ENCODE measurements at regions of chr22 and their contacts with region 1.

Region 1: DNA sequence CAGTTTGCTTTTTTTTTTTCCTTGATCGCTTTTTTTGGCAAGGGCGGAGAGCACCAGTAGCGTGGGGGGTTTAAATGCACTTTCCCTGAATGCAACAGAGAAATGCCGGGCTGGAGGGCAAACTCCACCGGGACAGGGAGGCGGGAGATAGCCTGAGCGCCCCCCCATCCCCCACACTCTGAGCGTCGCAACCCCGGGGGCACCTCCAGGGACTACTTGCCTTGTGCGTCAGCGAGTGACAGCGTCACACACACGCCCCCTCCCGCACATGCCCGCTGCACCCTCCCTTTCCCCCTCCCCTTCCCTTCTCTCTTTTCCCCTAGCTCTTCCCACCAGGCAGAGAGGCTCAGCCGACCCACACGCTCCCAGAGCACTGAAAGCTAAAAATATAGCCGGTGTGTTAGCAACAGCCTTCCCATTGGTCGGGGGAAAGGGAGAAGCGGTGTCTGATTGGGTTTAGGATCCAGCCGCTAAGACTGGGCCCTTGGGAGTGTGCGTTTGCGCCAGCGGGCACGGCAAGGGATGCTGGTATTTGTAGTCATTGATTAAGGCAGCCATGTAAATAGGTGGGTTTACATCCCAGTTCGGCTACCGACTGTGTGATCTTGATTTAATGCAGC is 1.7 kb upstream of the TOB2 start:
- DNase-seq: peak; percentile 95
- ATAC-seq: peak; percentile 73
- H3K4me3 Mint-ChIP-seq: peak overlapping the region; percentile 86
- H3K27ac Mint-ChIP-seq: peak overlapping the region; percentile 97
- H3K4me1 Mint-ChIP-seq: peaks cover 8% of the 10 kb centered on the region
- H3K27me3 Mint-ChIP-seq: no peaks in the 10 kb centered on the region

Region 2: DNA sequence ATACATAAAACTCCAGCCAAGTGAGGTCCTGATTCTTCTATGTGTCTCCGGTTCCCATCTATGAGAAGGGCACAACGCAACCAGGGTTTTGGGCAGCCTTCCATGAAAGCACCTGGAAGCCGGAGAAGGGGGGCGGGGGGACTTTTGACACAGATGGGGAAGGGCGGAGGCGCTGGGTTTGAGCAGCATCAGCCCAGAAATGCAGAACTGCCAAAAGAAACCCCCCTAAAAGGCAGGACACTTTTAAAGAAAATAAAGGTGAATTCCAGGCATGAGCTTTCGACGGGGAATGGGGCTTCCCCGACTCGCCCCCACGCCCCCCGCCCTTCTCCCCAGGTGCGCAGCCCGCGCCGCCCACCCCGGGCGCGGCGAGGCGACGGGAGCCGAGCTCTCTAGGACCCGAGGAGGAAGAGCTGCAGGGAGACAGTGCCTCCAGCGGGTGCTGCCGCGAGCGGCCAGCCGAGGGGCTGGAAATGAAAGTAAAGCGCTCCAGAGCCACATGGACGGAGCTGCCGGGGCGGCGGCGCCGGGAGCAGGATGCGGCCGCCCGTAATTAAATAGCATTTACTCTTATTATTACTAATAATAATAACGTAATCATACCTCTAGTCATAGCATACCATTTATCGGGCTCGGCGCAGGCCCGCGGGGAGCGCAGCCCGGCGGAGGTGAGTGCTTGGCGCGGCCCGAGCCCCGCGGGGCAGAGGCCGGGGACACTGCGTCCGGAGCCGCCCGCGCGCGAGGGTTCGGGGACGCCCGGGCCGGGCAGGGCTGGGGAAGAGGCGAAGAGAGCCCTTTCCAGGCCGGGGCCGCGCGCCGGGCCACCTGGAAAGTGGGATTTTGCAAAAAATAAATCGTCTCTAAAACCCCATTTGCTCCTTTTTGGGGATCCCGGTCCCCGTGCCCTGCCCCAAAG is 146.9 kb before region 1 on chr22 and contains the start of gene ZC3H7B:
- CTCF ChIA-PET with region 1: no interaction called
- POLR2A ChIA-PET with region 1: no interaction called
- intact Hi-C with region 1: loop called in 1 of 2 experiments (anchors 1 kb)
- DNase-seq: peak; percentile 92
- ATAC-seq: peak; percentile 96
- H3K4me3 Mint-ChIP-seq: peak within 1 kb of the TSS; percentile 74
- H3K27ac Mint-ChIP-seq: peak within 1 kb of the TSS; percentile 76
- H3K4me1 Mint-ChIP-seq: peaks cover 31% of the 10 kb centered on the region
- H3K27me3 Mint-ChIP-seq: no peaks in the 10 kb centered on the region
- total RNA-seq, gene ZC3H7B: 41.7 to 43.4 TPM

Region 3: DNA sequence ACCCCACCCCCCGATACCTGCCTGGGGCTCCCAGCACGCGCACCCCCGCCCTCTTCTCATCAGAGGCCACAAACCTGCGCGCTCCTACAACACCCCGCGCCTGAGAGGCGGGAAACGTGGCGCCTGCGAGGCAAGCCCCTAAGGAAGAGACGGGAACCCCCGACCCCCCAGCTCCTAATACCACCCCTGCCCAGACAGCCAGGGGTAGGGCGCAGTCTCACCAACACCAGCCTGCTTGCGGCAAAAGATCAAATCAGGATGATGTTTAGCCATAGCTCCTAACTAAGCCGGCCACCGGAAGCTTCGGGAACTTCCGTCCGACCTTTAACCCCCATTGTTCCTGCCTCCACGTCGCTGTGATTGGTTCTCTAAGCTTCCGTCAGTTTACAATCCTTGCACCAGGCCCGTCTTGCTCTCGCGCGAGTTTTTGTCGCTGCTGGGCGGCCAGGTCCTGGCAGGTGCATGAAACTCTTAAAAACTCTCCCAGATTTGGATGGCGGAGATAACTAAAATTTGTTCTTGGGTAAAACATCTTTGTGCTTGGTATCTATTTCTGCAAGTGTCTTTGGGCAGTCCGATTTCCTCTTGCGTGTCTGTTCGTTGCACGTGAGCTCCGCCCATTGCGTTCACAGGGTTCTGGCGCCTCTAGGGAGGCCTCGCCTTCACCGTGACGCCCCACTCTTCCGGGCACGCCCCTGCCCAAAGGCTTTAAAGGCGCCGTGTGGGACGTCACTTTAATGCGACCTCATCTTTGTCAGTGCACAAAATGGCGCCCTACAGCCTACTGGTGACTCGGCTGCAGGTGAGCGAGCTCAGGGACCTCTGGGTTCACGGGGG is 20.3 kb after region 1 on chr22 and contains the starts of genes ACO2 and PHF5A:
- CTCF ChIA-PET with region 1: interaction called, 22 read pairs
- POLR2A ChIA-PET with region 1: interaction called, 53 read pairs
- intact Hi-C with region 1: loop called (anchors 1 kb)
- DNase-seq: peak; percentile 98
- ATAC-seq: peak; percentile 94
- H3K4me3 Mint-ChIP-seq: peak within 1 kb of the TSS; percentile 90
- H3K27ac Mint-ChIP-seq: peak within 1 kb of the TSS; percentile 99
- H3K4me1 Mint-ChIP-seq: peaks cover 47% of the 10 kb centered on the region
- H3K27me3 Mint-ChIP-seq: no peaks in the 10 kb centered on the region
- total RNA-seq, gene ACO2: 95.4 to 106 TPM
- total RNA-seq, gene PHF5A: 54.5 to 61.1 TPM

Region 4: DNA sequence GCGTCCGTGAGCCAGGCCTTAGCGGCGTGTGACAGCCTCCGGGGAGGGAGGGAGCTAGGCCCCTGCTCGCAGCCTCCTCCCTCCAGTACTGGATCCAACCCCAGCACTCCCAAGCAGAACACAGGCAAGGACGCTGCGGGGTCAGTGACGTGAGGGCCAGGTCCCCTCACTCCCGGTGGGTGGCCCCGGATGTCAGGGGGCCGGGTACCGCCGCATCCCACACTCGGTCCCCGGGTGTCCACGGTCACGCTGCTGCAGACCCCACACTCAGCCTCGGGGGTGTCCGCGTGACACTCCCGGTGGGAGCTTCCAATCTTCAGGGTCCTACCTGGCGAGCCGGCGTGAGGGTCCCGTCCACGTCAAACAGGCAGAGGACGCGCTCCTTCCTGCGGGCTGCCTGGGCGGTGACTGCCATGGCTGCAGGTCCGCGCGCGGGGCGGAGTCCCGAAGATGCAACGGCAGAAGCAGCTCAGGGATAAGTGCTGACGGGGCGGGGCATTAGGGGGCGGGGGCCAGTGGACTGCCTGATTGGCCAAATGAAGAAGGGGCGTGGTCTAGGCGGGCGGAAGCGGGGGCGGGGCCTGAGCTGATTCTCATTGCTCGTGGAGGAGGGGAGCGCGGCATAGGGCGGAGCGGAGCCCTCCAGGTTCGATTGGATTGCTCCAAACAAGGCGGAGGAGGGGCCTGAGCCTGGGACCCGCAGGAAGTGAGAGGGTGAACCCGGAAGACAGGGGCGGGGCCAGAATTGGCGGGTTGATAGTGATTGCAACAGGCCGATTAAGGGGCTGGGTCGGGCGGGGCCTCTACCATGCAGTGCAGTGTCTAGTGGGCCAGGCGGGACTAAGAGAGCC is 141.3 kb after region 1 on chr22 and contains the start of gene PMM1:
- CTCF ChIA-PET with region 1: no interaction called
- POLR2A ChIA-PET with region 1: interaction called, 6 read pairs
- intact Hi-C with region 1: loop called in 1 of 2 experiments (anchors 1 kb)
- DNase-seq: peak; percentile 100
- ATAC-seq: peak; percentile 99
- H3K4me3 Mint-ChIP-seq: peak within 1 kb of the TSS; percentile 88
- H3K27ac Mint-ChIP-seq: peak within 1 kb of the TSS; percentile 85
- H3K4me1 Mint-ChIP-seq: peaks cover 15% of the 10 kb centered on the region
- H3K27me3 Mint-ChIP-seq: no peaks in the 10 kb centered on the region
- total RNA-seq, gene PMM1: 30.4 to 37.4 TPM

Region 5: DNA sequence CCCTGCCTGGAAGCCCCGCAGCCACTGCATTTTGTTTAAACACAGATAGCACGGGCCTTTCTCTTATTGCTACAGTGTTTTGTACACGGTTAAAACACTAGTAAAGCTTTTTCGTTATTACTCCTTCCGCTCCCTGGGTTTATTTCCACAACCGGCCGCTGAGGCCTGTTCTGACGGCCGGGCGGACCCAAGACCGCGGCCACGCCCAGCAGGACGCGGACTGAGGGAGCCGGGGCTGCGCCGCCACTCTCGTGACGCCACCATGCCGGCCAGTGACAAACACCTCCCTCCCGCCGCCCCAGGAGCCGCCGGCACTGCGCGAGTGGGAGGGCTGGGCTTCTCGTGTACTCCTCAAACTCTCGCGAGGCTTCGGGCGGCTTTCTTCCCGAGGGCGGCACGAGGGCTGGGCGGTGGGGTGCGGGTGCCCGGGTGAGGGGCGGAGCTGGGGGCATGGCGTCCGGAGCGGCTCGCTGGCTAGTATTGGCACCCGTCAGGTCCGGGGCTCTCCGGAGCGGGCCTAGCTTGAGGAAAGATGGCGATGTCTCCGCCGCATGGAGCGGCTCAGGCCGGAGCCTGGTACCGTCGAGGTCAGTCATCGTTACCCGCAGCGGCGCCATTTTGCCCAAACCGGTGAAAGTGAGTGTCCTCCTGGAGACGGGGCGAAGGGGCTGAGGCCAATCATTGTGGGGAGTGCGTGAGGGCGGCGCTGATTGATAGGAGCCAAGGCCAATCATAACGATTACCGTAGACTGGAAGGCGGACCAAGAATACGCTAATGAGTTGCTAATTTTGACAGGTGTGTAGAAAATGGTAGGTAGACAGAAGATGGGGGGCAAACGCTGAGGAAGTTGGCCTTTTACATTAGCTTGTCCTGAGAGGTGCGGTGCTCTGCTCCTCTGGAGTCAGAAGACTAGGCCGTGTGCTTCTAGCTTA is 631.3 kb after region 1 on chr22 and contains the start of gene SMDT1:
- CTCF ChIA-PET with region 1: no interaction called
- POLR2A ChIA-PET with region 1: no interaction called
- intact Hi-C with region 1: loop called in 1 of 2 experiments (anchors 10 kb)
- DNase-seq: peak; percentile 99
- ATAC-seq: peak; percentile 95
- H3K4me3 Mint-ChIP-seq: peak within 1 kb of the TSS; percentile 90
- H3K27ac Mint-ChIP-seq: peak within 1 kb of the TSS; percentile 96
- H3K4me1 Mint-ChIP-seq: peaks cover 29% of the 10 kb centered on the region
- H3K27me3 Mint-ChIP-seq: no peaks in the 10 kb centered on the region
- total RNA-seq, gene SMDT1: 17.2 to 45.4 TPM